Activated CD4-positive, alpha-beta T cell treated with anti-CD3 and anti-CD28 coated beads, Interleukin-2, amount 10 ng/mL, durations not matched to agents 24 days and 14 days (primary cell): ENCODE measurements at regions of chr11 and their contacts with region 1.

Region 1: DNA sequence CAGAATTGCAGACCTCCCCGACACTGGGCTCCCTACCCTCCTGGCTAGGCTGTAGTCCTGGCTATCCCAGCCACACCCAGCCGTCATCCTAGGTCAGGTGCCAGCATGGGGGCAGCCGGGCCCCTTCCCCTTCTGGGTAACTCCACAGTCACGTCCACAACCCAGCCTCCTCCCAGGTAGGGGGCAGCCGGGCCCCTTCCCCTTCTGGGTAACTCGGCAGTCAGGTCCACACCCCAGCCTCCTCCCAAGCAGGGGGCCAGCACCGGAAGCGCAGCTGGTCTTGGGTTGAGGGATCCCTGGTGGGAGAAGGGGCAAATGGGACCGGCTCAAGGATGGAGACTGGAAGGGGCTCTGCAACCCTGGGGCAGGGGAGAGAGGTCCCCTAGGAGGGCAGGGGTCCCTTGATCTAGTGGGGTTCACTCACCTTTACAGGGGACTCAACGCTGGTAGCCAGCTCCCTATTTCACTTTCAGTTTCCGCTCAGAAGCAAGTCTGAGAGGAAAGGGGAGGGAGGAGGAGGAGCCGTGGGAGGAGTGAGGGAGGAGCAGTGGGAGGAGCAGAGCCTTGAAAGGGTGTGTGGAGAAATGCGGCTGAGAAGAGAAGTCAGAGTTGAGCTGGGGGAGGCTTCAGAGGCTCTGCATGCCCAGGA is at the start of gene TRIM21:
- DNase-seq: peak; percentile 98
- H3K4me3 Mint-ChIP-seq: peak within 1 kb of the TSS; percentile 96
- H3K27ac Mint-ChIP-seq: peak within 1 kb of the TSS; percentile 92
- H3K4me1 Mint-ChIP-seq: peaks cover 47% of the 10 kb centered on the region
- H3K27me3 Mint-ChIP-seq: no peaks in the 10 kb centered on the region
- total RNA-seq, gene TRIM21: 27.4 and 32.7 TPM in 2 replicates

Region 2: GRCh38 chr11:4430051-4430450 is 36.7 kb after region 1 on chr11:
- intact Hi-C with region 1: no loop called
- DNase-seq: no peak
- H3K4me3 Mint-ChIP-seq: no peak overlapping the region
- H3K27ac Mint-ChIP-seq: no peak overlapping the region
- H3K4me1 Mint-ChIP-seq: no peaks in the 10 kb centered on the region
- H3K27me3 Mint-ChIP-seq: peaks cover 13% of the 10 kb centered on the region

Region 3: GRCh38 chr11:4493480-4493818 is 100.1 kb after region 1 on chr11:
- intact Hi-C with region 1: loop called (anchors 1 kb)
- DNase-seq: no peak
- H3K4me3 Mint-ChIP-seq: no peak overlapping the region
- H3K27ac Mint-ChIP-seq: no peak overlapping the region
- H3K4me1 Mint-ChIP-seq: peaks cover 8% of the 10 kb centered on the region
- H3K27me3 Mint-ChIP-seq: peaks cover 18% of the 10 kb centered on the region

Region 4: DNA sequence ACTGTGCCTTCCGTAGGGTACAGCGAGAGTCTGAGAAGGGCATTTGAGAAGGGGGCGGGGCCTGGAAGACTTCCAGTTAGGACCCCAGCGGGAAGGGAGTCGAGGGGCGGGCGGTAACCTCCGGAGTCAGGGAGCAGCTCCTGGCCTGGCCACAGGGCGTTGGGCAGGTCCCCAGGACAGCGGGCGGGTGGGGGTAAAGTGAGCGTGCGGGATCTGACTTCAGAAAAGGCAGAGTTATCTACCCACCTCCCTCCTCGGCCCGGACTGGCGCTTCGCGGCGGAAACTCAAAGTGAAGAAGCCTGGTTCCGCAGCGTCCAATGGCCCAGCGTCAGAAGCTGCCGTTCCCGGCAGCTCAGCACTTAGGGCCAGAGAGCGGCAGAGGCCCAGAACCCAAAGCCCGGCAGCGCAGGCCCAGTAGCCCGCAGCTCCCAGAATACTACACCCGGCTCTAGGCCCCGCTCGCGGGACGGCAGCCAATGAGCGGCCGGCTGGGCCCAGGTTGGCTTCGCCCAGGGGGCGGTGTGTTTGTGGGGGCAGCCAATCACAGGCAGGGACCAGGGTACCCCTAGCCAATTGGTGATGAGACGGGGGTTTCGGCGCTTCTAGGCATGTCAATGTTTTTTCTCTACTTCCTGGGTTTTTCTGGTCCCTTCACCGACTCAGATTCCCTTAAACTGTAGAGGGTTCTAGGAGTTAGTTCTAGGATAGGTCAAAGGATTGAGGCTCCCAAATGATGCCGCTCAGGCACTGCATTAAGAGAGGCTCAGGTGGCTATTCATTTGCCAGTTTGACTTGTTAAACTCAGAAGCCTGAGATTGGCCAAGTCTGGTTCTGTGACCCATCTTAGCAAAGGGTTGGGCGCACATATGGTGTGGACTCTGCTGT is 214.7 kb after region 1 on chr11 and contains the start of gene TRIM68:
- intact Hi-C with region 1: loop called (anchors 5 kb)
- DNase-seq: peak; percentile 98
- H3K4me3 Mint-ChIP-seq: peak within 1 kb of the TSS; percentile 89
- H3K27ac Mint-ChIP-seq: peak within 1 kb of the TSS; percentile 91
- H3K4me1 Mint-ChIP-seq: peaks cover 30% of the 10 kb centered on the region
- H3K27me3 Mint-ChIP-seq: no peaks in the 10 kb centered on the region
- total RNA-seq, gene TRIM68: 8.7 and 11.3 TPM in 2 replicates